Activated CD4-positive, alpha-beta T cell treated with anti-CD3 and anti-CD28 coated beads for 36 hours (primary cell): ENCODE measurements at regions of chr12 and their contacts with region 1.

Region 1: DNA sequence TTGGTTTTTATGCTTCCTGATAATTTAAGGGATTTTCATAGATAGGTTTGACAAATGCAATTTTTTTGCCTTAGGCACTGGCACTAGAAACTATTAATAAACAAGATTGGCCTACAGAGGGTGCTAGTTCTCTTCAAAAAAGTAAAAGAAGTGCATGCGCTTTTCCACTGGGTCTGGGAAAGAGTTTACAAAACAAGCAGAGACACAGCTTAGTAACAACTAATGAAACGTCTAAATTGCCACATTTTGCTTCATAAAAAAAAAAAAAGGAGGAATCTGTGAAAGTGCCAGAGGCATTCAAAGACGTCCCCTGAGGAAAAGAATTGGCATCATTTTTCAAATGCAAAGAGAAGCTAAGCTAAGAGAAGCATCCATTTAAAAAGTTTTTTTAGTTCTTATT is 58.3 kb upstream of the EEA1 start:
- DNase-seq: no peak
- ATAC-seq: no peak
- H3K4me3 Mint-ChIP-seq: peak overlapping the region; percentile 22
- H3K27ac Mint-ChIP-seq: peak overlapping the region; percentile 88
- H3K4me1 Mint-ChIP-seq: peaks cover 37% of the 10 kb centered on the region
- H3K27me3 Mint-ChIP-seq: no peaks in the 10 kb centered on the region

Region 2: DNA sequence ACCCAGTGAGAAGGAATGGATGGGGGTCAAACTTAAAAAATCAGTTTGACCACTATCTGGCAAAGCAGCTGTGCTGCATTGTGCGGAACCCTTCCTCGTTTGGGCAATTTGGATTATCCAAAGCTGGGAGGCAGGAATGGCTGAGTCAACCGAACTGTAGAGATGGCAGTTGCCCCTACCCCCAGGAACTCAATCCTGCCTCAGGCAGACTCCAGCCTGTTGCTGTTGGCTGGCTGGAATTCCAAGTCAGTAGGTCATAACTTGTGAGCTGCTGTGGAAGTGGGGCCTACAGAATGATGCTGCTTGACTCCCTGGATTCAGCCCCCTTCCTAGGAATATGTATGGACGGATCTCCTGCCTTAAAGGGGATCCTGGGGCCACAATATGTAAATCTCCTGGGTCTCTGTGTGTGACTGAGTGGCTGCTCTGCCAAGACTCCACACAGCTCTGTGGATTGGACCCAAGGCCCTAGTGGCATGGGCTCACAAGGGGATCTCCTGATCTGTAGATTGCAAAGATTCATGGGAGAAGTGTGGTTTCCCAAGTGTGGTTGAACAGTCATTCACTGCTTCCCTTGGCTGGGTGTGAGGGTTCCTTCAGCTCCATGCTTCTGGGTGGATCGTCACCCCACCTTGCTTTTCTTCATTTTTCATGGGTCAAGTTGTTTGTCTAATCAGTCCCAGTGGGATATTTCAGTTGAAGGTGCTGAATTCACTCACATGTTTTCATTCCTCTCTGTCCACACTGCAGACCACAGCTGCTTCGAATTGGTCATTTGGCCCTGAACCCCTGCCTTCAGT is 1895.2 kb before region 1 on chr12:
- CTCF ChIA-PET with region 1: no interaction called
- POLR2A ChIA-PET with region 1: no interaction called
- intact Hi-C with region 1: no loop called
- DNase-seq: no peak
- ATAC-seq: no peak
- H3K4me3 Mint-ChIP-seq: no peak overlapping the region
- H3K27ac Mint-ChIP-seq: no peak overlapping the region
- H3K4me1 Mint-ChIP-seq: no peaks in the 10 kb centered on the region
- H3K27me3 Mint-ChIP-seq: peaks cover 6% of the 10 kb centered on the region

Region 3: GRCh38 chr12:92973601-92974000 is 13.8 kb before region 1 on chr12:
- CTCF ChIA-PET with region 1: interaction called, 30 read pairs
- POLR2A ChIA-PET with region 1: no interaction called
- intact Hi-C with region 1: no loop called
- DNase-seq: no peak
- ATAC-seq: peak; percentile 48
- H3K4me3 Mint-ChIP-seq: no peak overlapping the region
- H3K27ac Mint-ChIP-seq: no peak overlapping the region
- H3K4me1 Mint-ChIP-seq: peaks cover 19% of the 10 kb centered on the region
- H3K27me3 Mint-ChIP-seq: no peaks in the 10 kb centered on the region

Region 4: GRCh38 chr12:93098077-93098476 is 110.7 kb after region 1 on chr12:
- CTCF ChIA-PET with region 1: interaction called, 12 read pairs
- POLR2A ChIA-PET with region 1: no interaction called
- intact Hi-C with region 1: loop called (anchors 2 to 5 kb)
- DNase-seq: peak; percentile 84
- ATAC-seq: peak; percentile 87
- H3K4me3 Mint-ChIP-seq: no peak overlapping the region
- H3K27ac Mint-ChIP-seq: peak overlapping the region; percentile 51
- H3K4me1 Mint-ChIP-seq: peaks cover 21% of the 10 kb centered on the region
- H3K27me3 Mint-ChIP-seq: peaks cover 3% of the 10 kb centered on the region

Region 5: DNA sequence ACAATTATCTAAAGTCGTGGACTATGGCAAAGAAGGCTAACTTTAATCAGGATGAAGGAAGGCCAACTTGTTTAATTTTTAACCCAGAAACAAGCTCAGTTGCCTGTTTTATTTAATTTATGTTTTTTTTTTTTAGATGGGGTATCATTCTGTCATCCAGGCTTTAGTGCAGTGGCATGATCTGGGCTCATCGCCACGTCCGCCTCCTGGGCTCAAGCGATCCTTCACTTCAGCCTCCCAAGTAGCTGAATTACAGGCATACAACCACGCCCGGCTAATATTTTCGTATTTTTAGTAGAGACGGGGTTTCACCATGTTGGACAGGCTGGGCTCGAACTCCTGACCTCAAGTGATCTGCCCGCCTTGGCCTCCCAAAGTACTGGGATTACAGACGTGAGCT is 410.1 kb after region 1 on chr12:
- CTCF ChIA-PET with region 1: interaction called, 29 read pairs
- POLR2A ChIA-PET with region 1: no interaction called
- intact Hi-C with region 1: loop called in 1 of 2 experiments (anchors 1 kb)
- DNase-seq: no peak
- ATAC-seq: no peak
- H3K4me3 Mint-ChIP-seq: no peak overlapping the region
- H3K27ac Mint-ChIP-seq: no peak overlapping the region
- H3K4me1 Mint-ChIP-seq: peaks cover 4% of the 10 kb centered on the region
- H3K27me3 Mint-ChIP-seq: no peaks in the 10 kb centered on the region

Region 6: GRCh38 chr12:93514853-93515252 is 527.5 kb after region 1 on chr12:
- CTCF ChIA-PET with region 1: no interaction called
- POLR2A ChIA-PET with region 1: no interaction called
- intact Hi-C with region 1: no loop called
- DNase-seq: no peak
- ATAC-seq: no peak
- H3K4me3 Mint-ChIP-seq: no peak overlapping the region
- H3K27ac Mint-ChIP-seq: no peak overlapping the region
- H3K4me1 Mint-ChIP-seq: no peaks in the 10 kb centered on the region
- H3K27me3 Mint-ChIP-seq: no peaks in the 10 kb centered on the region

Region 7: DNA sequence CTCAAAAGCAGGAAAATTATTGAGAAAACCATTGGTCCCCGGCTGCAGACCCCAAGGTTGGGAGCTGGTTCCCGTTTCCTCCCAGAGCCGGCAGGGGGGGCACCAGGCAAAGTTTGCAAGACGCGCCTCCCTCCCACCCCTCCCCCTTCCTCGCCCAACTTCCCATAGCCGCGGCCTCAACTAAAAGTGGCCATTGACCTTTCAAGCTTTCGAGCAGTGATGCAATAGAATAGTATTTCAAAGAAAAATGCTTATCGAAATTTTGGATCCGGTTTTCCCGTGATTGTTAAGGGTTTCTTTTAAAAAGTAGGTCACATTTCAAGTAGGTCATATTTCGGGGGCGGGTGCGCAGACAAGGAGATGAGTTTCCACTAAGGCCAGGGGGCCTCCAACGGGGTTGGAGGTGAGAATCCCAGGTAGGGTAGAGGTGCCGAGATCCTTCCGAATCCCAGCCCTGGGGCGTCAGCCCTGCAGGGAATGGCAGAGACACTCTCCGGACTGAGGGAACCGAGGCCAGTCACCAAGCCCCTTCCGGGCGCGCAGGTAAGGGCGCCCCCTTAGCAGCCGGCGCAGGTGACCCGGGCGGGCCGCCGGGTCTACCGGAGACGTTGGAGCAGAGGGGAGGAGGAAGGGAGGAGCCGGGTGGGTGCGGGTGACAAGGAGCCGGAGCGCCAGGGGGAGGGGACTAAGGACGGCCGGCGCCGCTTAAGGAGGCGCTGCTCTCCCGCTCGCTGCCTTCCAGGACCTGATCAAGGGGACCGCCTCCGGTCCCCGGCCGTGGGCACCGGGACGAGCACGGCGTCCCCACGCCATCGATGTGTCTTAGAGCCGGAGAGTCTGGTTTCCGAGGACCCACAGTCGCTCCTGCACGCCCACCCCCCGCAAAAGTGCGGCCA is 582.5 kb after region 1 on chr12:
- CTCF ChIA-PET with region 1: interaction called, 3 read pairs
- POLR2A ChIA-PET with region 1: no interaction called
- intact Hi-C with region 1: loop called (anchors 5 to 10 kb)
- DNase-seq: peak; percentile 88
- ATAC-seq: peak; percentile 67
- H3K4me3 Mint-ChIP-seq: peak overlapping the region; percentile 82
- H3K27ac Mint-ChIP-seq: peak overlapping the region; percentile 75
- H3K4me1 Mint-ChIP-seq: peaks cover 16% of the 10 kb centered on the region
- H3K27me3 Mint-ChIP-seq: peaks cover 23% of the 10 kb centered on the region

Region 8: GRCh38 chr12:93979189-93979588 is 991.8 kb after region 1 on chr12:
- CTCF ChIA-PET with region 1: no interaction called
- POLR2A ChIA-PET with region 1: no interaction called
- intact Hi-C with region 1: loop called in 1 of 2 experiments (anchors 5 kb)
- DNase-seq: peak; percentile 43
- ATAC-seq: no peak
- H3K4me3 Mint-ChIP-seq: no peak overlapping the region
- H3K27ac Mint-ChIP-seq: no peak overlapping the region
- H3K4me1 Mint-ChIP-seq: peaks cover 22% of the 10 kb centered on the region
- H3K27me3 Mint-ChIP-seq: peaks cover 12% of the 10 kb centered on the region